Activated naive CD8-positive, alpha-beta T cell treated with anti-CD3 and anti-CD28 coated beads, Interleukin-2, amount 10 ng/mL, durations not matched to agents 7 days and 5 days (primary cell): ENCODE measurements at regions of chr20 and their contacts with region 1.

Region 1: GRCh38 chr20:13229538-13229937 is 8.5 kb downstream of the ISM1 start:
- DNase-seq: no peak
- ATAC-seq: peak; percentile 37
- H3K4me3 Mint-ChIP-seq: peak overlapping the region; percentile 82
- H3K27ac Mint-ChIP-seq: peak overlapping the region; percentile 93
- H3K4me1 Mint-ChIP-seq: peaks cover 37% of the 10 kb centered on the region
- H3K27me3 Mint-ChIP-seq: peaks cover 2% of the 10 kb centered on the region

Region 2: GRCh38 chr20:13212750-13213149 is 16.8 kb before region 1 on chr20:
- POLR2A ChIA-PET with region 1: no interaction called
- DNase-seq: no peak
- ATAC-seq: no peak
- H3K4me3 Mint-ChIP-seq: no peak overlapping the region
- H3K27ac Mint-ChIP-seq: no peak overlapping the region
- H3K4me1 Mint-ChIP-seq: peaks cover 10% of the 10 kb centered on the region
- H3K27me3 Mint-ChIP-seq: peaks cover 44% of the 10 kb centered on the region

Region 3: GRCh38 chr20:13249118-13249797 is 19.7 kb after region 1 on chr20:
- POLR2A ChIA-PET with region 1: interaction called, 12 read pairs
- DNase-seq: no peak
- ATAC-seq: no peak
- H3K4me3 Mint-ChIP-seq: no peak overlapping the region
- H3K27ac Mint-ChIP-seq: peak overlapping the region; percentile 99
- H3K4me1 Mint-ChIP-seq: peaks cover 42% of the 10 kb centered on the region
- H3K27me3 Mint-ChIP-seq: no peaks in the 10 kb centered on the region